PC-3 (cell line): ENCODE measurements at regions of chr6 and their contacts with region 1.

Region 1: GRCh38 chr6:69796642-69797390 is at the start of gene LMBRD1:
- DNase-seq: peak; percentile 90
- ATAC-seq: peak; percentile 95
- H3K4me3 ChIP-seq: peak within 1 kb of the TSS; percentile 81
- H3K27ac ChIP-seq: peak within 1 kb of the TSS; percentile 61
- H3K4me1 ChIP-seq: peaks cover 3% of the 10 kb centered on the region; the same call in 1 of the 2 replicates
- H3K27me3 ChIP-seq: no peaks in the 10 kb centered on the region
- CTCF ChIP-seq: peak; percentile 73
- total RNA-seq, gene LMBRD1: 5.4 and 5.6 TPM in 2 replicates

Region 2: GRCh38 chr6:69775585-69775849 is 21.3 kb before region 1 on chr6:
- CTCF ChIA-PET with region 1: no interaction called
- POLR2A ChIA-PET with region 1: no interaction called
- intact Hi-C with region 1: loop called (anchors 1 kb)
- DNase-seq: no peak
- ATAC-seq: no peak; the same call in 1 of the 2 replicates
- H3K4me3 ChIP-seq: no peak overlapping the region; the same call in 1 of the 2 replicates
- H3K27ac ChIP-seq: peak overlapping the region; percentile 85
- H3K4me1 ChIP-seq: peaks cover 31% of the 10 kb centered on the region
- H3K27me3 ChIP-seq: no peaks in the 10 kb centered on the region
- CTCF ChIP-seq: no peak

Region 3: DNA sequence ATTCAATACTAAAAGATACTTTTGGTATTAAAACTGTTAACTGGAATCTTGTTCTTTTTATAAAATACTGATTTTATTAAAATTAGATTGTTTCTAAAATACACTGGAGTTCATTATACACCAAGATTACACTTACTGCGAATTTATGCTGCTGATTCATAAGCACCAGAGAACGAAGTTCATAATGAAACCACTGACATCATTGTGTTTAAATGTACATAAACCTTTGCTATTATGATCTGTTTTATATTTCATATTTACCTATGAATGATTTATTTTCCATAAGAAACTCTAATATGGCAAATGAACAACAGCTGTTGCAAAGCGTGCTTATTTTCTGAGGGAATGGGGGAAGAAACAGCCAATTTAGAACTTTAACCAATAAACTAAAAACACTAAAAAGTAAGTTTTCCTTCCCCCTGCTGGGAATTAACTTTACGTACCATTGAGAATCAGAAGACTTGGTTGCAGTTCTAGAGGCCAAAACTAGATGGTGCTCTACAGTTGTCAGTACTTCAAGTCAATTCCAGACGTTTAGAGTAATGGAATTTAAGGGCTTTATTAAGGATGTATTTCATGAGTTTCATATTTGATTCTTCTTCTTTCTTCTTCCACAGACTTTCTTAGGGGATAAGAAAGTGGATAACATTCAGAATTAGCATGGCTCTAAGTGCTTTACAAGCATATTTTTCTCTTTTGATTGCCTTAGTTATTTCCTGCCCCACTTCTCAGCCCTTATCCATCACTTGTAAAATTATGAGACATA is 38.8 kb after region 1 on chr6:
- CTCF ChIA-PET with region 1: interaction called, 10 read pairs
- POLR2A ChIA-PET with region 1: no interaction called
- intact Hi-C with region 1: no loop called
- DNase-seq: peak; percentile 66
- ATAC-seq: peak; percentile 49; the same call in 1 of the 2 replicates
- H3K4me3 ChIP-seq: no peak overlapping the region
- H3K27ac ChIP-seq: no peak overlapping the region
- H3K4me1 ChIP-seq: no peaks in the 10 kb centered on the region
- H3K27me3 ChIP-seq: peaks cover 17% of the 10 kb centered on the region; the same call in 1 of the 2 replicates
- CTCF ChIP-seq: peak; percentile 76

Region 4: GRCh38 chr6:70072540-70073179 is 275.8 kb after region 1 on chr6:
- CTCF ChIA-PET with region 1: no interaction called
- POLR2A ChIA-PET with region 1: no interaction called
- intact Hi-C with region 1: no loop called
- DNase-seq: no peak
- ATAC-seq: no peak
- H3K4me3 ChIP-seq: no peak overlapping the region
- H3K27ac ChIP-seq: no peak overlapping the region
- H3K4me1 ChIP-seq: no peaks in the 10 kb centered on the region
- H3K27me3 ChIP-seq: peaks cover 3% of the 10 kb centered on the region; the same call in 1 of the 2 replicates
- CTCF ChIP-seq: no peak